GM12878 (cell line): ENCODE measurements at regions of chr2 and their contacts with region 1.

Region 1: DNA sequence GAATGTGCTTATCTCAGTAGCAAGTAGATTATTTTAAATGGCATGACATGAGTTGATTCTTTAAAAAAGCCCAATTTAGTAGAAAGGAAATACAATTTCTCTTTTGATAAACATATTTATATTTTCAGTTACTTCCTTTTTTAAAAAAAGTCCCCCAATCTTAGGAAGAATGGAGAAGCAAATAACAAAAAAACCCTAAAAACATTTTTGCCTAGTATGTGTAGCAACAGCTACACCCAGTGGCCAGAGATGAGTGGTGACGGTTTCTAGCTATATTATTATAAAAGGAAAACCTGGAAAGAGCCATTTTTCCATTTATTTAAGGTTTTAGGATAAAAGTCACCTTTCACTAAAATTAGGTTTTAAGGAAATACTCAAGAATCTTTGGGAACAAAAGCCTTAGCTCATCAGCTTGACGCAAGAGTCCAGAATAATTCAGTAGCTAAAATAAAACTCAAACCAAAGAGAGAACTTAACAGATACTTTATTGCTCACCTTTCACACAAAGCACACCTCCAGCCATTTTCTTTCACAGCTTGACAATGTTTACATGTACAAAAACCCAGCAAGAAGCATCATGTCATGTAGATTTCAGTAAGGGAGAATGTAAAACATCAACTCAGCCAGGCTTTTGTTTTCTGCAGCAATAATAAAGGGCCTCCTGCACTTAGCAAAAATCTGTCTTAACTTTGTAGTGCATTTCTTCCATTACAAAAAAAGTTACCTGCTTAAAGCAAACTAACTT is 15.7 kb downstream of the FAM98A start:
- DNase-seq: peak; percentile 26
- ATAC-seq: peak; percentile 73
- H3K4me3 ChIP-seq: no peak overlapping the region
- H3K27ac ChIP-seq: 0 out of 2 replicates have a peak overlapping the region, but pooled peaks have one; percentile 6
- H3K4me1 ChIP-seq: peaks cover 3% of the 10 kb centered on the region; the same call in 1 of the 2 replicates
- H3K27me3 ChIP-seq: no peaks in the 10 kb centered on the region
- CTCF ChIP-seq: peak; percentile 72 to 85 (median 83)
- EP300 ChIP-seq: no peak
- POLR2A ChIP-seq: no peak
- RAD21 ChIP-seq: peak; percentile 96

Region 2: GRCh38 chr2:32772638-32773447 is 810.5 kb before region 1 on chr2:
- CTCF ChIA-PET with region 1: interaction called, 9 read pairs
- POLR2A ChIA-PET with region 1: no interaction called
- RAD21 ChIA-PET with region 1: interaction called, 6 read pairs
- SMC1A ChIA-PET with region 1: interaction called, 6 read pairs
- in situ Hi-C with region 1: loop called (anchors 25 kb)
- intact Hi-C with region 1: loop called (anchors 1 kb)
- DNase-seq: no peak
- ATAC-seq: peak; percentile 71
- H3K4me3 ChIP-seq: no peak overlapping the region
- H3K27ac ChIP-seq: no peak overlapping the region
- H3K4me1 ChIP-seq: no peaks in the 10 kb centered on the region
- H3K27me3 ChIP-seq: no peaks in the 10 kb centered on the region
- CTCF ChIP-seq: peak; percentile 36 to 68 (median 55); a peak in 5 of 6 replicates
- EP300 ChIP-seq: no peak
- POLR2A ChIP-seq: no peak
- RAD21 ChIP-seq: peak; percentile 92

Region 3: GRCh38 chr2:33372940-33373553 is 210.3 kb before region 1 on chr2:
- CTCF ChIA-PET with region 1: interaction called, 20 read pairs
- POLR2A ChIA-PET with region 1: no interaction called
- RAD21 ChIA-PET with region 1: interaction called, 6 read pairs
- SMC1A ChIA-PET with region 1: interaction called, 32 read pairs
- in situ Hi-C with region 1: no loop called
- intact Hi-C with region 1: loop called (anchors 10 kb)
- DNase-seq: peak; percentile 19
- ATAC-seq: peak; percentile 73
- H3K4me3 ChIP-seq: no peak overlapping the region
- H3K27ac ChIP-seq: no peak overlapping the region
- H3K4me1 ChIP-seq: no peaks in the 10 kb centered on the region
- H3K27me3 ChIP-seq: no peaks in the 10 kb centered on the region; a peak in 1 of 4 replicates
- CTCF ChIP-seq: peak; percentile 74 to 83 (median 80); a peak in 5 of 6 replicates
- EP300 ChIP-seq: no peak
- POLR2A ChIP-seq: no peak
- RAD21 ChIP-seq: peak; percentile 86

Region 4: DNA sequence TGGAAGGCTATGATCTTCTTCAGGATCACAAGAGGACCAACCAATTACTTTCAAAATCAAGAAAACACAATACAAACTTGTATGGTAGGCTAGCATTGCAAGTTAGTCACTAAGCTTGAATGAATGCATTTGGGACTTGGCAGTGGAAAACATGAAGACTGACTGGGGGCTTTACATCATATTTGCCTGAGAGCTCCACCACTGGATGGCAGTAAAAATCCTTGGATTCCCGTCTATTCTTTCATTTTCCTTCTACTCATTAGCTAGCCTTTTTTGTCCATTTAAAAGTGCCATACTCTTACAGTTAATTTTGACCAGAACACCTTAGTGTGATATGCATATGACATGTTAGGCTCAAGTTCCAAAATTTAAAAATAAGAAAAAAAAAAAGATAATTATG is 170.4 kb before region 1 on chr2:
- CTCF ChIA-PET with region 1: interaction called, 50 read pairs
- POLR2A ChIA-PET with region 1: no interaction called
- RAD21 ChIA-PET with region 1: interaction called, 37 read pairs
- SMC1A ChIA-PET with region 1: interaction called, 31 read pairs
- in situ Hi-C with region 1: no loop called
- intact Hi-C with region 1: loop called (anchors 1 kb)
- DNase-seq: no peak
- ATAC-seq: no peak
- H3K4me3 ChIP-seq: no peak overlapping the region
- H3K27ac ChIP-seq: no peak overlapping the region
- H3K4me1 ChIP-seq: no peaks in the 10 kb centered on the region
- H3K27me3 ChIP-seq: no peaks in the 10 kb centered on the region
- CTCF ChIP-seq: peak in 2 of 3 experiments; percentile 25 to 44; a peak in 2 of 6 replicates
- EP300 ChIP-seq: no peak
- POLR2A ChIP-seq: no peak
- RAD21 ChIP-seq: peak; percentile 47

Region 5: DNA sequence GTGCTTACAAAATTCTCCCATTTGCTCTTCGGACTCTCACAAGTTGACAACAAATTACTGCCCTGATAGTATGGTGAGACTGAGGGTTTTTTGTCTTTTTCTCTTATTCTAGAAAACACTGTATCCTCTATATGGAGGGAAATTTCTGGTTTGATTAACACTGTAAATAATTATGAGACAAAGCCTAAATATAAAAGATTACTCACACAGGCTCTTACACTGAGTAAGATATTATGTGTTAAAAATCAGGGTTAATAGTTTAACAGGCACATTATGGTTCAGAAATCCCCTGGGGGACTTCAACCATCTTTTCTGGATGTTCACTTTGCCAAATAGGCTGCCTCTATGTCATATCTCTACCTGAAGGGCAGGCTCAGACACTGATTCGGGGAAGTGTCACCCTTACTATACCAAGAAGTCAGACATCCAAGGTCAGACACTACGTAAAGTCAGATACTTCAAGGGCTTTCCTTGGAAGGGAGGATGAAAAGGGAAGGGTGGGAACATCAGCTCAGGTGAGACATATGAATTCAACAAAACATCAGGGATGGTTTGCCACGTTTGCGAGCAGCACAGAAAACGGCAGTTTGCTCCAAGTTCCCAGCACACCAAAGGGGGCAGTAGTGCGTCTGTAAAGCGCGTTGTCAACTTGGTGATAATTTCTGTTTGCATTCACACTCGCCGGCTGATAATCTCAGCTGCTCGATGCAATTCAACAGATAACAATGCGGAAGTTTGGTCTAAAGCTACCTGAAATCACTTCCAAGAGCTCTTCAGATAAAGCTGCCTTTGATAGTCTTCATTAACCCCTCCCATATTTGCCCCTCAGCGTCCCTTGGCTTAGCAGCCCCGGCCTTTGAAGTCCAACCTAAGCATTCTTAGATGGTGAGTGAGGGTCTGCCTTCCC is 107.9 kb before region 1 on chr2:
- CTCF ChIA-PET with region 1: interaction called, 84 read pairs
- POLR2A ChIA-PET with region 1: interaction called, 5 read pairs
- RAD21 ChIA-PET with region 1: interaction called, 104 read pairs
- SMC1A ChIA-PET with region 1: interaction called, 85 read pairs
- in situ Hi-C with region 1: no loop called
- intact Hi-C with region 1: loop called (anchors 2 kb)
- DNase-seq: no peak
- ATAC-seq: peak; percentile 64
- H3K4me3 ChIP-seq: peak overlapping the region; percentile 91
- H3K27ac ChIP-seq: peak overlapping the region; percentile 97
- H3K4me1 ChIP-seq: peaks cover 3% of the 10 kb centered on the region; the same call in 1 of the 2 replicates
- H3K27me3 ChIP-seq: no peaks in the 10 kb centered on the region
- CTCF ChIP-seq: peak; percentile 86 to 93 (median 88)
- EP300 ChIP-seq: peak in 1 of 2 experiments; percentile 37; a peak in 1 of 4 replicates
- POLR2A ChIP-seq: peak; percentile 3; the same call in 1 of the 2 replicates
- RAD21 ChIP-seq: peak; percentile 74

Region 6: DNA sequence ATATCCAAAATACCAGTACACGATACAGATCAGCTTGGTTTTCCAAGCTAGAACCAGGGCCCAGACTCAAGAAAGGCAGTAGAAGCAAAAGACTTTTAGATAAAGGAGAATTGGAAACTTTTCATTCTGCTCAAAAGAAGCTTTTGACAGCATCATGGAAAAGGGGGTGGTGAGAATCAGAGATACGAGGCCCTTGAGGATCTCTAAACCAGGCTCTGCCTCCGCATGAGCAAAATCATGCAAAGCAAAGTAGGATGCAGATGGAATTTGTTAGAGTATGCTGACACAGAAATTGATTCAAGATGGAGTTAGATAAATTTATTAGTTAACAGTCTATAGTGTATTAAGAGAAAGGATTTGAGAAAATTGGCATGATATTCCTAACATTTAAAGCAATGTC is 24.0 kb before region 1 on chr2:
- CTCF ChIA-PET with region 1: interaction called, 15 read pairs
- POLR2A ChIA-PET with region 1: no interaction called
- RAD21 ChIA-PET with region 1: no interaction called
- SMC1A ChIA-PET with region 1: interaction called, 12 read pairs
- in situ Hi-C with region 1: no loop called
- intact Hi-C with region 1: no loop called
- DNase-seq: no peak
- ATAC-seq: no peak
- H3K4me3 ChIP-seq: no peak overlapping the region
- H3K27ac ChIP-seq: no peak overlapping the region
- H3K4me1 ChIP-seq: no peaks in the 10 kb centered on the region
- H3K27me3 ChIP-seq: no peaks in the 10 kb centered on the region
- CTCF ChIP-seq: no peak
- EP300 ChIP-seq: no peak
- POLR2A ChIP-seq: no peak
- RAD21 ChIP-seq: no peak

Region 7: GRCh38 chr2:34045101-34045655 is 461.8 kb after region 1 on chr2:
- CTCF ChIA-PET with region 1: no interaction called
- POLR2A ChIA-PET with region 1: no interaction called
- RAD21 ChIA-PET with region 1: no interaction called
- SMC1A ChIA-PET with region 1: no interaction called
- in situ Hi-C with region 1: no loop called
- intact Hi-C with region 1: no loop called
- DNase-seq: no peak
- ATAC-seq: no peak
- H3K4me3 ChIP-seq: no peak overlapping the region
- H3K27ac ChIP-seq: no peak overlapping the region
- H3K4me1 ChIP-seq: no peaks in the 10 kb centered on the region
- H3K27me3 ChIP-seq: no peaks in the 10 kb centered on the region
- CTCF ChIP-seq: no peak
- EP300 ChIP-seq: no peak
- POLR2A ChIP-seq: no peak
- RAD21 ChIP-seq: no peak